Endothelial cell of umbilical vein (primary cell): ENCODE measurements at regions of chr21 and their contacts with region 1.

Region 1: GRCh38 chr21:45294509-45295291 is 7.0 kb upstream of the POFUT2 start:
- DNase-seq: peak; percentile 98
- H3K4me3 ChIP-seq: no peak overlapping the region
- H3K27ac ChIP-seq: peak overlapping the region; percentile 100
- H3K4me1 ChIP-seq: peaks cover 35% of the 10 kb centered on the region
- H3K27me3 ChIP-seq: no peaks in the 10 kb centered on the region
- CTCF ChIP-seq: no peak
- POLR2A ChIP-seq: peak; percentile 87

Region 2: DNA sequence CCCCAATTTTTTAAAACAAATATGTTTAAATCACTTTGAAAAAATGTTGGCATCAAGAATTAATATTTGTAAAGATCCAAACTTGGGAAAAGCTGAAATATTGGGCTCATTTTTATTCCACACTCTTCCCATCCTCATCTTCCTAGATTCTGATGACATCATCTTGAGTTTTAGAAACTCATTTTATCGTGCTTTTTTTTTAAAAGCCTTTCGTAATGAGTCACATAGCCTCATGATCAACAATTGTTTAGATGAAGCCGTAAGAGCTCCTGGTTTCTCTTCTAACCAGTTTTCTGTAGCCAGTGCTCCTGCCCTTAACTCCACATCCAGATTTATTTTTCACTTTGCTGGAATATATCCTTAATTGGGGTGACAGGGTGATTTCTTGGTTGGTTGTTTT is 85.7 kb before region 1 on chr21:
- CTCF ChIA-PET with region 1: no interaction called
- POLR2A ChIA-PET with region 1: no interaction called
- dilution Hi-C with region 1: no loop called
- intact Hi-C with region 1: no loop called
- DNase-seq: no peak
- H3K4me3 ChIP-seq: no peak overlapping the region
- H3K27ac ChIP-seq: no peak overlapping the region
- H3K4me1 ChIP-seq: no peaks in the 10 kb centered on the region
- H3K27me3 ChIP-seq: no peaks in the 10 kb centered on the region
- CTCF ChIP-seq: no peak
- POLR2A ChIP-seq: no peak

Region 3: GRCh38 chr21:45470773-45471524 is 176.2 kb after region 1 on chr21:
- CTCF ChIA-PET with region 1: interaction called, 9 read pairs
- POLR2A ChIA-PET with region 1: no interaction called
- dilution Hi-C with region 1: no loop called
- intact Hi-C with region 1: loop called (anchors 1 kb)
- DNase-seq: peak; percentile 87
- H3K4me3 ChIP-seq: no peak overlapping the region
- H3K27ac ChIP-seq: peak overlapping the region; percentile 79
- H3K4me1 ChIP-seq: peaks cover 22% of the 10 kb centered on the region
- H3K27me3 ChIP-seq: no peaks in the 10 kb centered on the region
- CTCF ChIP-seq: no peak
- POLR2A ChIP-seq: no peak